Psoas muscle (tissue), 8 donors: ENCODE measurements at regions of chr15 and their contacts with region 1.

Region 1: DNA sequence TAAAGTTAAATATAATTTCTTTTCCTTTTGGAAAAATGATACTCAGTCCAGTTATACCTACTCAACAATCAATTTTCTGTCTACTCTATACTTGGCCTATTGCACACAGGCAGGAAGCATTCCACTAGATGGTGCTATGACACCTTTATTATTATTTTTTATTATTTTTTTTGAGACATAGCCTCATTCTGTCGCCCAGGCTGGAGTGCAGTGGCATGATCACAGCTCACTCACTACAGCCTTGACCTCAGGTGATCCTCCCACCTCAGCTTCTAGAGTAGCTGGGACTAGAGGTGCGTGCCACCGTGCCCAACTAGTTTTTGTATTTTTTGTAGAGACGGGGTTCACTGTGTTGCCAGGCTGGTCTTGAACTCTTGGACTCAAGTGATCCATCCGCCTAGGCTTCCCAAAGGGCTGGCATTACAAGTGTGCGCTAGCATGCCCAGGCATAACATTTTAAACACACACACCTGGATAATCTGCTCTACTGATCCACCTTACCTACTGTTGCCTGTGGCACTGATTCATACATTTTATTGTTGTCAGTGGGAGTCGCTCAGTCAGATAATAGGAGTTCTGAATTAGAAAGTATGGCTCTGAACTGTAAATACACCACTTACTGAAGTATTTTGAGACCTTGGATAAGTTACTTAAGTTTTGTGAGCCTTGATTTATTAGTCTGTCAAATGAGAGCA is 56.2 kb downstream of the EIF3J start:
- DNase-seq: no peak
- ATAC-seq: peak in 3 of 4 donors; percentile 37 to 51 (median 40)
- H3K4me3 ChIP-seq: no peak overlapping the region
- H3K27ac ChIP-seq: no peak overlapping the region
- H3K4me1 ChIP-seq: no peaks in the 10 kb centered on the region
- H3K27me3 ChIP-seq: no peaks in the 10 kb centered on the region
- CTCF ChIP-seq: peak; percentile 24

Region 2: DNA sequence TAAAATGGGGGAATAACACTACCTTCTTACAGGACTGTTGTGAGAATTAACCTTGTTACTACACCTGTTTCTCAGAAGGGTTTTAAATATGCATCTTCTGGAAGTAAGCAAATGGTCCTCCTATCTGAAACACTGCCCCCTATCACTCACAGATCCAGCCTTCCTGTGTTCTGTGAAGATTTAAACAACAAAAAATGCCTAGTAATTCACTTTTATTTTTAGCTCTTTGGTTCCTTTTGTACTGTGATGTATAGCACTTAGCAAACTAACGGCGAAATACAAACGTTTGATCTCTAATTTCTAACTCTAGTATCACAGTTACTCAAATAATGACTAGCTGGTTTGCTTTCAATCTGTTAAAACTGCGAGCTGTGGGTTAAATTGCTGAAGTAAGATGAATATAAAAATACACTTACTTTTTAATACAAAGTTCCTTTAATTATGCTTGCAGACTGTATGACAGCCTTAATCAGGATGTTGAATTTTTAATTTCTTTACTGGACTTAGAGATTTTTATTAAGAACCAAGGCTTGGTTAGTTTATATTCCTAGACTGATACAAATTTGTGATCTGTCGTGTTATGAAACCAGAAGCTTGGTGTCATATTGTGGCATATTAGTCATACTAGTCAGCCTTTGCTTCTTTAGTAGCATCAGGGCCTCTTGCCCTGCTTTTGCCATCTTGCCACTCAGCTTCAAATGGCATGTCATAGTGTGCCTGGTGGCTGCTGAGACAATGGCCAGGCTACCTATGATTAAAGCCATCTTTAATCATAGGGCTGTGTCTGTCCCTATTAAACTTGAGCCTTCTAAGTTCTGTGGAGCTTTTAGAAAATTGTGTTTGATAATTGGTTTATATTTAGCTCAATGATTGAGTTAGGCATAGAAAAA is 47.0 kb before region 1 on chr15:
- intact Hi-C with region 1: no loop called
- DNase-seq: peak in 1 of 2 donors; percentile 52
- ATAC-seq: peak; percentile 90 to 95 (median 92)
- H3K4me3 ChIP-seq: peak overlapping the region; percentile 27
- H3K27ac ChIP-seq: peak overlapping the region; percentile 80
- H3K4me1 ChIP-seq: peaks cover 51% of the 10 kb centered on the region
- H3K27me3 ChIP-seq: no peaks in the 10 kb centered on the region
- CTCF ChIP-seq: peak; percentile 8

Region 3: GRCh38 chr15:44663409-44664308 is 70.5 kb after region 1 on chr15 and contains the start of gene SPG11:
- intact Hi-C with region 1: no loop called
- DNase-seq: peak; percentile 97 to 99
- ATAC-seq: peak; percentile 98 to 99 (median 98)
- H3K4me3 ChIP-seq: peak within 1 kb of the TSS; percentile 82
- H3K27ac ChIP-seq: peak within 1 kb of the TSS; percentile 98
- H3K4me1 ChIP-seq: peaks cover 20% of the 10 kb centered on the region
- H3K27me3 ChIP-seq: peaks cover 0 to under 1% (median 0%) of the 10 kb centered on the region in 3 donors
- CTCF ChIP-seq: peak; percentile 95
- total RNA-seq, gene SPG11: 26.3 to 38.1 (median 36.0) TPM

Region 4: GRCh38 chr15:44738340-44738984 is 145.3 kb after region 1 on chr15:
- intact Hi-C with region 1: loop called in 1 of 2 experiments (anchors 10 kb)
- DNase-seq: no peak
- ATAC-seq: peak in 3 of 4 donors; percentile 50 to 64 (median 51)
- H3K4me3 ChIP-seq: no peak overlapping the region
- H3K27ac ChIP-seq: no peak overlapping the region
- H3K4me1 ChIP-seq: no peaks in the 10 kb centered on the region
- H3K27me3 ChIP-seq: no peaks in the 10 kb centered on the region
- CTCF ChIP-seq: peak; percentile 76